ENCODE measurements at regions of chr1 and their contacts with region 1.

Region 1: GRCh38 chr1:180462102-180462501 is 40.3 kb downstream of the ACBD6 start:
- DNase-seq: no peak
- H3K4me3 ChIP-seq: no peak overlapping the region
- H3K27ac ChIP-seq: no peak overlapping the region
- H3K4me1 ChIP-seq: no peaks in the 10 kb centered on the region
- CTCF ChIP-seq: no peak

Region 2: DNA sequence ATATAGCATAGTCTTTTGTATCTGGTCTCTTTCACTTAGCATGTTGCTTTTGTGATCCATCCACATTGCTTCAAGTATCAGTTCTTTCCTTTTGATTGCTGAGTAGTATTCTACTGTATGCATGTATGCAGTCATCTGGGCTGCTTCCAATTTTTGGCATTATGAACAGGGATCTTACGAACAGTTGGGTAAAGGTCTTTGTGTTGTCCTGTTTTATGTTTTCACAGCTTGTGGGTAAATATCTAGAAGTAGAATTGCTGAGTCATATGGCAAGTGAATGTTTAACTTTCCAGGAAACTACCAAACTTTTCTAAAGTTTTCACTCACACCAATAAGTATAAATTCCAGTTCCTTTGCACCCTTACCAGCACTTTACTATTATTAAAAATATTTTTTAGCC is 171.1 kb before region 1 on chr1:
- CTCF ChIA-PET with region 1: no interaction called
- POLR2A ChIA-PET with region 1: interaction called, 10 read pairs
- intact Hi-C with region 1: no loop called
- DNase-seq: no peak
- H3K4me3 ChIP-seq: no peak overlapping the region
- H3K27ac ChIP-seq: no peak overlapping the region
- H3K4me1 ChIP-seq: no peaks in the 10 kb centered on the region
- CTCF ChIP-seq: no peak

Region 3: DNA sequence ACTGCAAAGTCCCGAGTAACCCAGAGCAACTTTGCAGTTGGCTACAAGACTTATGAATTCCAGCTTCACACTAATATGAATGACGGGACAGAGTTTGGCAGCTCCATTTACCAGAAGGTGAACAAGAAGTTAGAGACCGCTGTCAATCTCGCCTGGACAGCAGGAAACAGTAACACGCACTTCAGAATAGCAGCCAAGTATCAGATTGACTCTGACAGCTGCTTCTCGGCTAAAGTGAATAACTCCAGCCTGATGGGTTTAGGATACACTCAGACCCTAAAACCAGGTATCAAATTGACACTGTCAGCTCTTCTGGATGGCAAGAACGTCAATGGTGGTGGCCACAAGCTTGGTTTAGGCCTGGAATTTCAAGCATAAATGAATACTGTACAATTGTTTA is 26.5 kb before region 1 on chr1:
- CTCF ChIA-PET with region 1: no interaction called
- POLR2A ChIA-PET with region 1: no interaction called
- intact Hi-C with region 1: no loop called
- DNase-seq: no peak
- H3K4me3 ChIP-seq: no peak overlapping the region
- H3K27ac ChIP-seq: no peak overlapping the region
- H3K4me1 ChIP-seq: no peaks in the 10 kb centered on the region
- CTCF ChIP-seq: no peak

Measured in OCI-LY7 (cell line).